Left ventricle myocardium inferior (tissue), 1 donor: ENCODE measurements at regions of chr1 and their contacts with region 1.

Region 1: GRCh38 chr1:222465211-222466041 is 82.5 kb downstream of the HHIPL2 start:
- DNase-seq: peak; percentile 90
- H3K4me3 ChIP-seq: peak overlapping the region; percentile 60
- H3K27ac ChIP-seq: peak overlapping the region; percentile 85
- H3K4me1 ChIP-seq: peaks cover 12% of the 10 kb centered on the region
- H3K27me3 ChIP-seq: no peaks in the 10 kb centered on the region
- CTCF ChIP-seq: peak; percentile 100

Region 2: GRCh38 chr1:221913351-221913750 is 552.1 kb before region 1 on chr1:
- intact Hi-C with region 1: no loop called
- DNase-seq: no peak
- H3K4me3 ChIP-seq: no peak overlapping the region
- H3K27ac ChIP-seq: no peak overlapping the region
- H3K4me1 ChIP-seq: no peaks in the 10 kb centered on the region
- H3K27me3 ChIP-seq: no peaks in the 10 kb centered on the region
- CTCF ChIP-seq: no peak

Region 3: GRCh38 chr1:222195857-222196256 is 269.6 kb before region 1 on chr1:
- intact Hi-C with region 1: no loop called
- DNase-seq: no peak
- H3K4me3 ChIP-seq: no peak overlapping the region
- H3K27ac ChIP-seq: no peak overlapping the region
- H3K4me1 ChIP-seq: no peaks in the 10 kb centered on the region
- H3K27me3 ChIP-seq: no peaks in the 10 kb centered on the region
- CTCF ChIP-seq: no peak

Region 4: DNA sequence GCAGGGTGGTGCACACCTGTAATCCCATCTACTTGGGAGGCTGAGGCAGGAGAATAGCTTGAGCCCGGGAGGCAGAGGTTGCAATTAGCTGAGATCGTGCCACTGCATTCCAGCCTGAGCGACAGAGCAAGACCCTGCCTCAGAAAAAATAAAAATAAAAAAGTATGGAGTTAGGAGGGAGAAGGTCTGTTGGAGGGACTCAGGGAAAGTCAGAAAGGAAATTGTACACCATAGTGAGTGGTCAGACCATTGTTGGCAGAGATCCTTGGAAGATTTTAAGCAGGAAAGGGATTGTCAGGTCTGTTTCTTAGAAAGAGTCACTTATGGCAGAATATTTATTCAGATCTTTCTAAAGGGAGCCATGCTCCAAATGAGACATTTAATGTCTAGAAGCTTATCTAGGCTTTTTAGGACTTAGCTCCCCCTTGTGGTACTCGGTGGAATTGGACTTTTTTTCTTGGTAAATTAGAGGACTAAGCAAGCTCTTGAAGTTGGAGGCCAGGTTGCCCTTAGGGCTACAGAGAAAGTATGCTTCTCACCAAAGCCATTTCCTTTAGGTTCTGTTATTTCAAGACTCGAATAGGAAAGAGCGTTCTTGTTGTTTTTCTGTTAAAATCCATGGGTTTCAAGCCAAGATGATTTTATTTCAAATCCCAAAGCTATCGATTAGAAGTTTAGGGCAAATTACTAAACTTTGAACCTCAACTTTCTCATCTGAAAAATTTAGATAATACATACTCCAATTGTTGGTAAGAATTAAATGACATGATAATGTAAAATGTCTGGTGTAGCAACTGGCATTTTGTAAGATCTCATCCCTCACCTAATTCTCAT is 169.0 kb after region 1 on chr1:
- intact Hi-C with region 1: loop called (anchors 2 kb)
- DNase-seq: no peak
- H3K4me3 ChIP-seq: no peak overlapping the region
- H3K27ac ChIP-seq: no peak overlapping the region
- H3K4me1 ChIP-seq: no peaks in the 10 kb centered on the region
- H3K27me3 ChIP-seq: no peaks in the 10 kb centered on the region
- CTCF ChIP-seq: peak; percentile 90